ENCODE measurements at regions of chr6 and their contacts with region 1.

Region 1: DNA sequence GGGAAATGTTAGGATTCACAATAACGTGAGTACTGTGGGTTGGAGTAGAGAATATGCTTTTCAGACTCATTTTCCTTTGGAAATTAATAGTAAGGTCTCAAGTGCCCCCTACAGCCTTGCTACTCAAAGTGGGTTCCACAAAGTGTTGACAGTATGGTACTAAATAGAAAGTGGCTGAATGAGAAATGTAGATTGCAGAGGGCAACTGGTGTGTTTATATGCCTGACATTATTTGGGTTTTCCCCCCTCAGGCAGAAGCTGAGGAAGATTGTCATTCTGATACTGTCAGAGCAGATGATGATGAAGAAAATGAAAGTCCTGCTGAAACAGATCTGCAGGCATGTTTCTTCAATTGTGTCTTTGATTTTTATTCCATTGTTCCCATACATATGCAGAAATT is 5.6 kb downstream of the FBXO9 start:
- DNase-seq: no peak
- H3K4me3 ChIP-seq: no peak overlapping the region
- H3K27ac ChIP-seq: no peak overlapping the region
- H3K4me1 ChIP-seq: peaks cover 0 to 7% of the 10 kb centered on the region in 2 donors
- H3K27me3 ChIP-seq: no peaks in the 10 kb centered on the region
- CTCF ChIP-seq: no peak
- POLR2A ChIP-seq: no peak

Region 2: DNA sequence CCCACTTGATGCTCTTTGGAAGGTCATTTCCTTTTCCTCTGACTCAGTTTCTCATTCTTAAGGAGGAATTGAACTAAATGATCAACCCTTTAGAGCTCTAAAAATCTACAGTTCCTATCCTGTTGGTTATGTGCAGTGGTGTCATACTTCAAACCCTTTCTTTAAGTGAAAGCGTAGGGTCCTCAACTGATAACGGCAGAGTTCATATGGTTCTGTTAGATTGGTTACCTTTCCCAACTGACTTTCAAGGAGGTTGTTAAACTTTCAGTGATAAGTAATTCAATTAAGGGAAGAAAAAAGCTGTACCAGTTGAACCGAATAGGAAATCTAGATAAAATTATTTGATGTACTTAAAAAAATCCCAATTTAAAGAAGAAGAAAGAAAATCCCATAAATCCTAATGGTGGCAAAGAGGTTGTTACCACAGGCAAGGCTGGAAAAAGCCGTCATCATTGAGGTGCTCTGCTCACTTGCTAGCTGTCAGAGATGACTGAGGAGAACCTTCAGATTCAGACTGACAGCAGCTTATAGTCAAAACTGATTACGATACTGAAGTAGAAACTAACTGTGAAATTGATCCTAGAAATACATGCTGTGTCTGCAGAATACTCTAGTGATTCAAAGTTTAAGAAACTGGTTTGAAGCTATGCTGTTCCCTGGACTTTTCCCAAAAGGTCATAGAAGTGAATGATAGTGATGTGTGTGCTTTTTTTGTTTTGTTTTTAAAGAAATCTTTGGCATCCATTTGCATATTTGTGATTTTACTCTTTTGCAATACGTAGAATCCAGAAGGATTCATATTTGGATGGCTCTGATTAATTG is 383.7 kb before region 1 on chr6:
- intact Hi-C with region 1: no loop called
- DNase-seq: no peak
- H3K4me3 ChIP-seq: no peak overlapping the region
- H3K27ac ChIP-seq: no peak overlapping the region
- H3K4me1 ChIP-seq: no peaks in the 10 kb centered on the region
- H3K27me3 ChIP-seq: no peaks in the 10 kb centered on the region
- CTCF ChIP-seq: no peak
- POLR2A ChIP-seq: no peak

Region 3: DNA sequence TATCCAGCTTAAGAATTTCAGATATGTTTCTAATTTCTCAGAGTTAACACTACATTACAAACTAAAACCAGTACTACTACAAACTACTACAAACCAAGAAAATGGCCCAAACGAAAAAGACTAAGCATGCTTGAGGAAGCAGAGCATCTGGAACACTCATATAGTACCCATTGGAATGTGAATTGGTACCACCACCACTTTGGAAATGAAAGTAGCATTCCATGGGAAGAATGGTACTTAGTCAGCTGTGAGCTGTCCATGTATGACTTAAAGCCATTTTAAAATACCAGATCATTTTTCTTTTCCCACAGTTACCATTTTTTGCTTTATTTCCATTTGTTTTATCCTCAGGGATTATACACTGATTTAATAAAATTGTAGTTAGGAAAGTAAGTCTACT is 24.9 kb after region 1 on chr6:
- intact Hi-C with region 1: no loop called
- DNase-seq: no peak
- H3K4me3 ChIP-seq: no peak overlapping the region
- H3K27ac ChIP-seq: no peak overlapping the region
- H3K4me1 ChIP-seq: no peaks in the 10 kb centered on the region
- H3K27me3 ChIP-seq: no peaks in the 10 kb centered on the region
- CTCF ChIP-seq: no peak
- POLR2A ChIP-seq: no peak

Region 4: DNA sequence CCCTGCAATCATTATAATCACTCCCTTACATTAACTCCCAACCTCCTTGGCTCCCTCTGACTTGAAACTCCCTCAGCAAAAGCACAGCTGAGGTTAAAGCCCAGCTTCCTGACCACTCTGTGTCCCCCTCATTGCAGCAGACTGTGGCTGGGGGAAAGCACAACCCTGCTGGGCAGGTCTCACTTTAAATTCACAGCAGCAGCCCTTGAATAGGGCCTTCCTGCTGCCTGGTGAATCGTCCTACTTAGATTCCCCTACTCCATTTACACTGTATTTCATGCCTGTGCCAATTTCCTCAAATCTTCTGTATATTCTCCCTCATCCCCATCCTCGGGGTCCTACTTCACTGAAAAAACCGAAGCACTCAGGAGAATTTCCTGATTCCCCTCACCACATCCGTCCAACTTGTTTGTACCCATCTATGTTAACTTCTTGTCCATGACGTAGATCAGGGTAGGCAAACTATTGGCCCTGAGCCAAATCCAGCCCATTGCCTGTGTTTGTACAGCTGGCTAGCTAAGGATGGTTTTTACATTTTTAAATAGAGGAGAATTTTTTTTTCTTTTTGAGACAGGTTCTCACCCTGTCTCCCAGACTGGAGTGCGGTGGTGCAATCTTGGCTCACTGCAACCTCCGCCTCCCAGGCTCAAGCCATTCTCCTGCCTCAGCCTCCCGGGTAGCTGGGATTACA is 109.3 kb after region 1 on chr6:
- intact Hi-C with region 1: loop called (anchors 5 kb)
- DNase-seq: peak; percentile 50 to 75
- H3K4me3 ChIP-seq: no peak overlapping the region
- H3K27ac ChIP-seq: peak overlapping the region in 1 of 2 donors; percentile 41
- H3K4me1 ChIP-seq: no peaks in the 10 kb centered on the region
- H3K27me3 ChIP-seq: no peaks in the 10 kb centered on the region
- CTCF ChIP-seq: no peak
- POLR2A ChIP-seq: no peak

Region 5: GRCh38 chr6:53410508-53411258 is 339.9 kb after region 1 on chr6:
- intact Hi-C with region 1: no loop called
- DNase-seq: no peak
- H3K4me3 ChIP-seq: no peak overlapping the region
- H3K27ac ChIP-seq: no peak overlapping the region
- H3K4me1 ChIP-seq: no peaks in the 10 kb centered on the region
- H3K27me3 ChIP-seq: no peaks in the 10 kb centered on the region
- CTCF ChIP-seq: peak in 1 of 3 donors; percentile 22
- POLR2A ChIP-seq: no peak

Measured in breast epithelium (tissue), 4 donors.